ENCODE measurements at regions of chr4 and their contacts with region 1.

Region 1: GRCh38 chr4:27000820-27001219 is 140.2 kb downstream of the STIM2 start:
- DNase-seq: no peak
- H3K4me3 ChIP-seq: no peak overlapping the region
- H3K27ac ChIP-seq: no peak overlapping the region
- H3K4me1 ChIP-seq: peaks cover 7% of the 10 kb centered on the region
- H3K27me3 ChIP-seq: no peaks in the 10 kb centered on the region
- CTCF ChIP-seq: no peak

Region 2: DNA sequence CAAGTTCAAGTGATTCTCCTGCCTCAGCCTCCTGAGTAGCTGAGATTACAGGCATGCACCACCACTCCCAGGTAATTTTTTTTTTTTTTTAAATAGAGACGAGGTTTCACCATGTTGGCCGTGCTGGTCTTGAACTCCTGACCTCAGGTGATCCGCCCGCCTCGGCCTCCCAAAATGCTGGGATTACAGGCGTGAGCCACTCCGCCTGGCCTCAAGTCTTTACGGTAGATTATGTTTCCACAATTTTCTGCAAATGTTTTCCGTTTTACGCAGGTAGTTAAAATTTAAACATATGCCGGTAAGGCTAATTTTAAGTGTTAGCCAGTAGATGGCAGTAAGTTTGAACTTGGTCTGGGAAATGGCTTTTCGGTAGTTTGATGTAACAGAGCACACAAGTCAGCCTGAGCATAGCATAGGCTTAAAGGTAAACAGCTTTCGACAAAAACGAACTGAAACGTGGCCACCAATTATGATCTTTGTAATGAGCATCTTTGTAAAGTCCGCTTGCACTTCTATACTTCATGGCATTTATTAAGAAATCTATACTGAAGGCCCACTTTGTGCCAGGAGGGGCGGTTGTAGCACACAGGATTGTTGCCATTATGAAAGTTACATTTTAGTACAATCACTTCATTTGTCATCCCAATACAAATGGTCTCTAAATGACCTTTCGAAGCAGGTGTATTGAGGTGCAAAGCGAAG is 541.6 kb before region 1 on chr4:
- intact Hi-C with region 1: loop called (anchors 10 kb)
- DNase-seq: no peak
- H3K4me3 ChIP-seq: no peak overlapping the region
- H3K27ac ChIP-seq: no peak overlapping the region
- H3K4me1 ChIP-seq: no peaks in the 10 kb centered on the region
- H3K27me3 ChIP-seq: no peaks in the 10 kb centered on the region
- CTCF ChIP-seq: peak; percentile 69

Region 3: GRCh38 chr4:26787461-26788340 is 213.1 kb before region 1 on chr4:
- intact Hi-C with region 1: loop called (anchors 5 kb)
- DNase-seq: peak; percentile 31
- H3K4me3 ChIP-seq: peak overlapping the region; percentile 26
- H3K27ac ChIP-seq: peak overlapping the region; percentile 74
- H3K4me1 ChIP-seq: peaks cover 21% of the 10 kb centered on the region
- H3K27me3 ChIP-seq: no peaks in the 10 kb centered on the region
- CTCF ChIP-seq: peak; percentile 57

Region 4: GRCh38 chr4:26860157-26860921 is 140.5 kb before region 1 on chr4 and contains the start of gene STIM2:
- intact Hi-C with region 1: loop called (anchors 10 kb)
- DNase-seq: peak; percentile 96
- H3K4me3 ChIP-seq: peak within 1 kb of the TSS; percentile 90
- H3K27ac ChIP-seq: peak within 1 kb of the TSS; percentile 97
- H3K4me1 ChIP-seq: peaks cover 77% of the 10 kb centered on the region
- H3K27me3 ChIP-seq: no peaks in the 10 kb centered on the region
- CTCF ChIP-seq: peak; percentile 52
- total RNA-seq, gene STIM2: 12.2 TPM

Region 5: GRCh38 chr4:27775156-27775555 is 774.3 kb after region 1 on chr4:
- intact Hi-C with region 1: no loop called
- DNase-seq: no peak
- H3K4me3 ChIP-seq: no peak overlapping the region
- H3K27ac ChIP-seq: no peak overlapping the region
- H3K4me1 ChIP-seq: no peaks in the 10 kb centered on the region
- H3K27me3 ChIP-seq: no peaks in the 10 kb centered on the region
- CTCF ChIP-seq: no peak

Measured in left ventricle myocardium inferior (tissue), 1 donor.